PC-9 (cell line): ENCODE measurements at regions of chr13 and their contacts with region 1.

Region 1: GRCh38 chr13:30132623-30133553 is 174.5 kb downstream of the KATNAL1 start:
- DNase-seq: peak; percentile 75 to 90
- H3K4me3 ChIP-seq: no peak overlapping the region
- H3K27ac ChIP-seq: no peak overlapping the region
- H3K4me1 ChIP-seq: peaks cover 7% of the 10 kb centered on the region
- H3K27me3 ChIP-seq: no peaks in the 10 kb centered on the region
- CTCF ChIP-seq: peak; percentile 90

Region 2: GRCh38 chr13:29676941-29677452 is 455.9 kb before region 1 on chr13:
- CTCF ChIA-PET with region 1: no interaction called
- POLR2A ChIA-PET with region 1: no interaction called
- intact Hi-C with region 1: no loop called
- DNase-seq: peak in 1 of 2 experiments; percentile 36
- H3K4me3 ChIP-seq: peak overlapping the region; percentile 20; the same call in 1 of the 2 replicates
- H3K27ac ChIP-seq: peak overlapping the region; percentile 50
- H3K4me1 ChIP-seq: peaks cover 20% of the 10 kb centered on the region
- H3K27me3 ChIP-seq: no peaks in the 10 kb centered on the region
- CTCF ChIP-seq: no peak

Region 3: DNA sequence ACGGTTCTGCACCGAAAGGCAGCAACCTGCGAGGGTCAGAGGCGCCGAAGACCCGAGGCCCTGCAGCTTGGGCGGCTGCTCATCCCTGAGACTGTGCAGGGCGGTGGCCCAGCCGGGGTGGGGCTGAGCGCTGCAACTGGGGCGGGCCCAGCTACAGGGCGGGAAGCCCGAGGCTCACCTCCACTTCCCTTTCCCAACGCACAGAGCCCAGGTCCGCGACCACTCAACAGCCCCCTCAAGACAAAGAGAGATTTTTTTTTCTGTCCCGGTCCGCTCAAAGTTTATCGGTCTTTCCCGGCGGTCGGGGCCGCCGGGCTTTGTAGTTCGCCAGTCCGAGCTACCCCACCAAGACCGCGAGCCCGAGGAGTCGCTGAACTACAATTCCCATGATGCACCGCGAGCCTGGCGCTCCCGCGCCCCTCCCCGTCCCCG is 173.9 kb after region 1 on chr13:
- CTCF ChIA-PET with region 1: interaction called, 3 read pairs
- POLR2A ChIA-PET with region 1: no interaction called
- intact Hi-C with region 1: loop called (anchors 10 kb)
- DNase-seq: peak; percentile 72 to 81
- H3K4me3 ChIP-seq: peak overlapping the region; percentile 99
- H3K27ac ChIP-seq: no peak overlapping the region
- H3K4me1 ChIP-seq: peaks cover 16% of the 10 kb centered on the region
- H3K27me3 ChIP-seq: no peaks in the 10 kb centered on the region
- CTCF ChIP-seq: no peak

Region 4: GRCh38 chr13:30422054-30422839 is 289.4 kb after region 1 on chr13 and contains the start of gene UBE2L5:
- CTCF ChIA-PET with region 1: no interaction called
- POLR2A ChIA-PET with region 1: interaction called, 10 read pairs
- intact Hi-C with region 1: no loop called
- DNase-seq: peak; percentile 67 to 69
- H3K4me3 ChIP-seq: peak within 1 kb of the TSS; percentile 84
- H3K27ac ChIP-seq: peak within 1 kb of the TSS; percentile 57
- H3K4me1 ChIP-seq: peaks cover 11% of the 10 kb centered on the region; the same call in 1 of the 2 replicates
- H3K27me3 ChIP-seq: no peaks in the 10 kb centered on the region
- CTCF ChIP-seq: no peak
- total RNA-seq, gene UBE2L5: not detected in 2 replicates

Region 5: DNA sequence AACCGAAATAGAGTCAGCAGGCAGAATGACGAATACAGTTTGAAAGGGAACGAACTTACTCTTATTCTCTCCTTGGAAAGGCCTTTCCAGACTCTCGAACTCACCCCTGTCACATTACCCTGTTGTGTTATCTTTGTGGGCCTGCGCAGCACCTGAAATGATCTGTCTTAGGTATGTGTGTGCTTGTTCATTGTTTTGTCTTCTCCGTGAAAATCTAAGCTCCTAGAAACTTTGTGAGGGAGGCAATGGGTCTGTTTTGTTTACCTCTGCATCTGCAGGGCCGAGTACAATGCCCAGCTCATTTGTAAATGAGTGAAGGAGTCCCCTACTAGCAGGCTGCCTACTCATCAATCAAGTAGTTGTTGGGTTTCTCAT is 313.2 kb after region 1 on chr13:
- CTCF ChIA-PET with region 1: no interaction called
- POLR2A ChIA-PET with region 1: no interaction called
- intact Hi-C with region 1: loop called (anchors 5 kb)
- DNase-seq: no peak
- H3K4me3 ChIP-seq: no peak overlapping the region
- H3K27ac ChIP-seq: no peak overlapping the region
- H3K4me1 ChIP-seq: no peaks in the 10 kb centered on the region
- H3K27me3 ChIP-seq: no peaks in the 10 kb centered on the region
- CTCF ChIP-seq: no peak

Region 6: DNA sequence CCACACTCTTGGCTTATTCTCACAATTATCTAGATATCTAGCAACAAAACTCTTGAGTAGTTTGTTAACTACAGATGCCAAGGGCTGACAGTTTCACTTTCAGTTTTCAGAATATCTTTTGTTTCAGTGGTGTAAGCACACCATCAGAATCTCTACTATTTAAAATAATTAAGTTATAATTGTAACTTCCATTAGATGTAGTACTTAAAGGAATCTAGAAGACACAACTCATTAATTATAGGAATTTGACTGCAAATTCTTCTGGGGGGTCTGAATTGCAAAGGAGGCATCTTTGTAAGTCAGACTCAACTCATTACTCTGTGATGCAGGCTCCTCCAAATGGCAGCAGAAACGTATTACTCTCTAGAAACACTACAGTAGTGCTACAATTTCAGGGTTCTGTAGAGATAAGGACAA is 440.0 kb after region 1 on chr13:
- CTCF ChIA-PET with region 1: interaction called, 3 read pairs
- POLR2A ChIA-PET with region 1: no interaction called
- intact Hi-C with region 1: loop called (anchors 10 kb)
- DNase-seq: no peak
- H3K4me3 ChIP-seq: no peak overlapping the region; the same call in 1 of the 2 replicates
- H3K27ac ChIP-seq: no peak overlapping the region
- H3K4me1 ChIP-seq: peaks cover 34% of the 10 kb centered on the region
- H3K27me3 ChIP-seq: no peaks in the 10 kb centered on the region
- CTCF ChIP-seq: no peak

Region 7: DNA sequence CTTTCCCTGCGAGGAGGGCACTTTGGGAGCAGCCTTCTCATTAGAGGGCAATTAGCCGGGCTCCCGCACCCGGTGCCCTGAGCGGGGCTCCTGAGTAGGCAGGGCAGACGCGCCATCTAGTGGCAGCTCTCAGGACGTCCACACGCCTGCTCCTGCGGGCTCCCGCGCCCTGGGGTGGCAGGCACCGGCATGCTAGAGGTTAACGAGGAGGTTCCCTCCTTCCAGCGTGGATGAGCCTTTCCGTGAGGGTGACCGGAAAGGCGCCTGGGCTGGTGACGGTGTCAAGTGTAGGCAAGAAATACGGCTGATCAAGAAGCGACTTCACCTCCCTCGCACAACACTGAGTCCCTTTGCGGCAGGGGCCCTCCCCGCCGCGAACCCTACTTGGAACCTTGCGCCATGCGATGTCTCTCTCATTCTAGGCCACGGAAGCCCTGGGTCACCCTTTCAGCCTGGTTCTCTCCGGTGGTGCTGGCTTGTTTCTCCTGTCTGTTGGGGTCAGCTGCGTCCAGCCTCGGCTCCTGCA is 670.1 kb after region 1 on chr13:
- CTCF ChIA-PET with region 1: no interaction called
- POLR2A ChIA-PET with region 1: no interaction called
- intact Hi-C with region 1: loop called (anchors 2 kb)
- DNase-seq: peak in 1 of 2 experiments; percentile 57
- H3K4me3 ChIP-seq: no peak overlapping the region
- H3K27ac ChIP-seq: no peak overlapping the region
- H3K4me1 ChIP-seq: no peaks in the 10 kb centered on the region
- H3K27me3 ChIP-seq: no peaks in the 10 kb centered on the region
- CTCF ChIP-seq: peak; percentile 95

Region 8: DNA sequence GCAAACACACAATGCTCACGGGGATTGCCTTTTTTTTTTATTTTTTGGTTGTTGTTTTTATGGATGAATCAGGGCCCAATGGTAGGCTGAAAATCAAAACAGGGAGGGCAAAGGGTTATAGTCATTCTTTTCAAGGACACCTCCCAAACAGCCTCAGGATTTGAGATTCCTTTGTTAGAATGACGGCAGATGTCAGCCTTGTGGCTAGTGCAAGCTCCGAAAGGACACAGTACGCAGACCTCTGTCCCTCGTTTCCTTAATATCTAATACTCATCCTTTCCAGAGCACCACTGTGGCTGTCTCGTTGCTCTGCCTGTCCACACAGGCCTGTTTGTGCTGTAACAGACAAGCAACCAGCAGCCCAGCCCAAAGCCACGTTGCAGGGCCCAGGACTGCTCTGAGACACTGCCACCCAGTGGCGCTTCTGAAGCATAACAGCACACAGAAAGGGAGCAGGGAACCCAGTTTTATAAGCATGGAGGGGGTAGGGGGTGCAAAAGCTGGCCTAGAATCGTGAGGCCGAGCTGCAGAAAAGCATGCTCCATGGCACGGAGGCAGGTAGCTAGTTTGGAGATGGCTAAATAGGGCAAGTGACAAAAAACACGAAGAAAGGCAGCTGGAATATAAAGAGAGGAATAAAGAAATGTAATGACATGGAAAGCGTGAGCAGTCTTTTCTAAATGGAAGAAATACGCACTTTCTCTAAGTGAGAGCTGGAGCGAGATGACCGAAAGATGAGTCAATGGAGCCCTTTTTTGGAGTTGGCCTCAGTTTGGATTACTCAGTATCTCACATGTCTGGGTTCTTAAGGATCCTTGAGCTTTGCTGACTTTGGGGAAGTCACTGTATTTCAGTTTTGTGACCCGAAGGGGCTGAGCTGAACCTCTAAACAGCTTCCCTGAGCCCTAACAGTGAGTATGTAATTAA is 732.5 kb after region 1 on chr13:
- CTCF ChIA-PET with region 1: no interaction called
- POLR2A ChIA-PET with region 1: no interaction called
- intact Hi-C with region 1: loop called (anchors 10 kb)
- DNase-seq: peak; percentile 57 to 65
- H3K4me3 ChIP-seq: no peak overlapping the region
- H3K27ac ChIP-seq: 0 out of 2 replicates have a peak overlapping the region, but pooled peaks have one; percentile 5
- H3K4me1 ChIP-seq: 0 out of 2 replicates have a peak, but pooled peaks cover 9% of the 10 kb centered on the region
- H3K27me3 ChIP-seq: no peaks in the 10 kb centered on the region
- CTCF ChIP-seq: peak; percentile 96